Activated CD4-positive, alpha-beta T cell treated with anti-CD3 and anti-CD28 coated beads, Interleukin-2, amount 10 ng/mL, durations not matched to agents 24 days and 14 days (primary cell): ENCODE measurements at regions of chr1 and their contacts with region 1.

Region 1: DNA sequence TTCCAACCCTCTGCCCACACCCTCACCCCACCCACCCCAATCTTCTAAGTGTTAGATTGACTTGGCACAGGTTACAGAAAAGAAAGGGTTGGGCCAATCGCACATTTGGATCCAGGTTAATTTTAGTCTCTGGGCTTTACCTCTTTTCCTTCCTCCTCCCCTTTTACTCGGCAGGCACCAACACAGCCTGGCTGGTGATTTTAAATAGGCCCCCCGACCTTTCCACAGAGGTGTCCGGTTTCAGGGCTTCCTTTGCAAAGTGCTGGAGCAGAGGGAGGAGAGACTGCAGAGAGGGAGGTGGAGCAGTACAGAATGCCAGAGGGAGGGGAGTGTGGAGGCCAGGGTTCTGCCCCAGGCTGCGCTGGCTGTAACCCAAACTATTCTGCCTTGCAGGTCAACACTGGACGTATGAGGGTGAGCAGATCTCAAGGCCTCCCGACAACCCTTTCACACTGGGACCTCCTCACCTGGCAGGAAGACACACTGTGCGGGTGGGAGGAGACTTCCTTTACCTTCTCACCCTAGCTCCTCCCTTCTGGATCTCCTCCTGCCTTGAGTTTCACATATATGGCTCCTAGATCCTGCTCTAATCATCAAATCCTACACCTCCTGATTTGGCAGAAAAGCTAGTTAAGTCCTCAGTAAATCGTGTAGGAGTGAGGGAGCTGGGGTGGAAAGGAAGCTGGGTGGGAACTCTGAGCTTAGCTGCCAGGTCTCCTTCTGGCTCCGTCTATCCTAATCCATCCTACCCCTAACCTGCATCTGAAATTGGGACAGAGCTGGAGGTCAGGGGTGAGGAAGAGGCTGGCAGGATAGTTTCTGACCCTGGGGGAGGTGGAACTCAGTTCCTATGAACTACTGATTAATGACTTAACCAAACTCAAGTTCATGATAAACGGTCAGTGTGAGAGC is 2.4 kb downstream of the CA14 start:
- DNase-seq: no peak
- H3K4me3 Mint-ChIP-seq: no peak overlapping the region
- H3K27ac Mint-ChIP-seq: no peak overlapping the region
- H3K4me1 Mint-ChIP-seq: peaks cover 18% of the 10 kb centered on the region
- H3K27me3 Mint-ChIP-seq: peaks cover 49% of the 10 kb centered on the region

Region 2: GRCh38 chr1:150235852-150236613 is 24.0 kb before region 1 on chr1 and contains the start of gene ANP32E:
- intact Hi-C with region 1: loop called (anchors 2 kb)
- DNase-seq: peak; percentile 98
- H3K4me3 Mint-ChIP-seq: no peak within 1 kb of the TSS
- H3K27ac Mint-ChIP-seq: no peak within 1 kb of the TSS
- H3K4me1 Mint-ChIP-seq: peaks cover 16% of the 10 kb centered on the region
- H3K27me3 Mint-ChIP-seq: peaks cover 6% of the 10 kb centered on the region
- total RNA-seq, gene ANP32E: 193 and 201 TPM in 2 replicates

Region 3: GRCh38 chr1:150321826-150322166 is 61.8 kb after region 1 on chr1:
- intact Hi-C with region 1: loop called (anchors 5 kb)
- DNase-seq: peak; percentile 65
- H3K4me3 Mint-ChIP-seq: peak overlapping the region; percentile 99
- H3K27ac Mint-ChIP-seq: peak overlapping the region; percentile 99
- H3K4me1 Mint-ChIP-seq: peaks cover 12% of the 10 kb centered on the region
- H3K27me3 Mint-ChIP-seq: peaks cover 2% of the 10 kb centered on the region

Region 4: GRCh38 chr1:150352866-150353265 is 92.9 kb after region 1 on chr1:
- intact Hi-C with region 1: no loop called
- DNase-seq: no peak
- H3K4me3 Mint-ChIP-seq: no peak overlapping the region
- H3K27ac Mint-ChIP-seq: no peak overlapping the region
- H3K4me1 Mint-ChIP-seq: no peaks in the 10 kb centered on the region
- H3K27me3 Mint-ChIP-seq: no peaks in the 10 kb centered on the region

Region 5: DNA sequence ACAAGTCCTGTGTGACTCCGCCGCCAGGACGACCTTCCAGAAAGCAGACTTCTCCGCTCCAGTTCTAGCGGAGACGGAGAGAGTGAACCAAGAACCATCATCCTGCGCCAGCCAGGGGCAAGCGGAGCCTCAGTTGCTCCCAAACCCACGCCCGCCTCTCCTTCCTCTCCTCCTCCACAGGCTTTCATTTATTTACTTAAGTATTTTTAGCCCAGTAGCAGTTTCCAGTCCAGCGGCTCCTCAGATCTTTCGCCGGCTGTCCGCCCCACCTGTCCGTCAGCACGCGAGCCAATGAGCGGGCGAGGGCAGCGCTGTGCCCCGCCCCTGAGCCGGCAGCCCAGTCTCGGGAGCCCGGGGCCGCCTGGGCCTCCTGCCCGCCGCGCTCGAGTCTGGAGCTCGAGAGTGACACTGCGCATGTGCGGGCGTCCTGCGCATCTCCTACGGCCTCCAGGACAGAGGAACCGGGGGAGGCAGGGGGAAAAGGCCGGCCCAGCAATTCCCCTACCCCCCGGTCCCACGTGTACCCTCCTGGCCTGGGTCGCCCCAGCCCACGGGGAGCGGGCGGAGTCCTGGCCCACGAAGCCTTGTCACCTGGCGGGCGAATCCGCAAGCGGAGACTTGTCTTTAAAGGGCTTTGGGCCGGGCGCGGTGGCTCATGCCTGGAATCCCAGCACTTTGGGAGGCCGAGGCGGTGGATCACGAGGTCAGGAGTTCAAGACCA is 255.5 kb after region 1 on chr1 and contains the start of gene FALEC:
- intact Hi-C with region 1: loop called (anchors 1 kb)
- DNase-seq: peak; percentile 98
- H3K4me3 Mint-ChIP-seq: peak within 1 kb of the TSS; percentile 95
- H3K27ac Mint-ChIP-seq: peak within 1 kb of the TSS; percentile 83
- H3K4me1 Mint-ChIP-seq: peaks cover 11% of the 10 kb centered on the region
- H3K27me3 Mint-ChIP-seq: peaks cover 2% of the 10 kb centered on the region
- total RNA-seq, gene FALEC: not detected in 2 replicates